Activated B cell treated with CpG ODN at 0.5 μM for 24 hours (primary cell): ENCODE measurements at regions of chr16 and their contacts with region 1.

Region 1: GRCh38 chr16:56643080-56643778 is 4.8 kb downstream of the MT1A start:
- DNase-seq: peak; percentile 42
- ATAC-seq: peak; percentile 99
- H3K4me3 Mint-ChIP-seq: peak overlapping the region; percentile 59
- H3K27ac Mint-ChIP-seq: no peak overlapping the region
- H3K4me1 Mint-ChIP-seq: peaks cover 18% of the 10 kb centered on the region
- H3K27me3 Mint-ChIP-seq: peaks cover 64% of the 10 kb centered on the region
- CTCF ChIP-seq: no peak

Region 2: GRCh38 chr16:56513972-56514371 is 129.3 kb before region 1 on chr16:
- CTCF ChIA-PET with region 1: no interaction called
- POLR2A ChIA-PET with region 1: no interaction called
- intact Hi-C with region 1: loop called (anchors 1 kb)
- DNase-seq: no peak
- ATAC-seq: peak; percentile 84
- H3K4me3 Mint-ChIP-seq: no peak overlapping the region
- H3K27ac Mint-ChIP-seq: peak overlapping the region; percentile 32
- H3K4me1 Mint-ChIP-seq: peaks cover 20% of the 10 kb centered on the region
- H3K27me3 Mint-ChIP-seq: no peaks in the 10 kb centered on the region
- CTCF ChIP-seq: no peak

Region 3: DNA sequence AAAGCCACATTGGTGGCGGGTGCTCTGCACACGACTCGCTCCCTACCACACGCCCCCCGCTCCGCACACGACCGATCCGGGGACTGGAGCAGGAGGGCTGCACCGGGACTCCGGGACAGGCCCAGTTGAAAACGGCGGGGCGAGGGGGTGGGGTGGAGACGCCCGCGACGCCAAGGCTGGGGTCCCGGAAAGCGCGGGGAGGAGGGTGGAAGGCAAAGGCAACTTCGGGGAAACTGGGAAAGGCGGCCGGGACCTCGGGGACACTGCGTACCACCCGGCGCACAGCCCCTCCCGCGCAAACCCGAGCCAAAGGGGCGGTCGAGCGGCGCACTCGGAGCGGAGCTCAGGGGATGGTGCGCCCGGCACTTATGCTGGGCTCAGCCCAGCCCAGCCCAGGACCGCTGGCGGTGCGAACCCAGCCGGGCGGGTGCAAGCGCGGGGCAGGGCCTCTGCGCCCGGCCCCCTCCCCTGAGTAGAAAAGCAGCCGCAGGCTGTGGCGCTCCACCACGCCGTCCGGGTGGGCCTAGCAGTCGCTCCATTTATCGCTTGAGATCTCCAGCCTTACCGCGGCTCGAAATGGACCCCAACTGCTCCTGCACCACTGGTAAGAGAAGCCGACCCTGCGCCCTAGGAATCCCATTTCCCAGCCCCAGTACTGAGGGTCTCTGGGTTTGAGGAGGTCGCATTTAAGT is 10.9 kb before region 1 on chr16 and contains the start of gene MT1M:
- CTCF ChIA-PET with region 1: interaction called, 3 read pairs
- POLR2A ChIA-PET with region 1: interaction called, 5 read pairs
- intact Hi-C with region 1: loop called (anchors 1 kb)
- DNase-seq: no peak
- ATAC-seq: no peak
- H3K4me3 Mint-ChIP-seq: peak within 1 kb of the TSS; percentile 65
- H3K27ac Mint-ChIP-seq: no peak within 1 kb of the TSS
- H3K4me1 Mint-ChIP-seq: peaks cover 43% of the 10 kb centered on the region
- H3K27me3 Mint-ChIP-seq: peaks cover 39% of the 10 kb centered on the region
- CTCF ChIP-seq: no peak
- total RNA-seq, gene MT1M: not detected in 2 replicates

Region 4: GRCh38 chr16:56657555-56658326 is 14.5 kb after region 1 on chr16 and contains the start of gene MT1F:
- CTCF ChIA-PET with region 1: no interaction called
- POLR2A ChIA-PET with region 1: interaction called, 4 read pairs
- intact Hi-C with region 1: loop called (anchors 2 kb)
- DNase-seq: peak; percentile 71
- ATAC-seq: peak; percentile 84
- H3K4me3 Mint-ChIP-seq: peak within 1 kb of the TSS; percentile 92
- H3K27ac Mint-ChIP-seq: peak within 1 kb of the TSS; percentile 88
- H3K4me1 Mint-ChIP-seq: peaks cover 39% of the 10 kb centered on the region
- H3K27me3 Mint-ChIP-seq: peaks cover 16% of the 10 kb centered on the region
- CTCF ChIP-seq: no peak
- total RNA-seq, gene MT1F: 21.4 and 22.8 TPM in 2 replicates